ENCODE measurements at regions of chr10 and their contacts with region 1.

Region 1: DNA sequence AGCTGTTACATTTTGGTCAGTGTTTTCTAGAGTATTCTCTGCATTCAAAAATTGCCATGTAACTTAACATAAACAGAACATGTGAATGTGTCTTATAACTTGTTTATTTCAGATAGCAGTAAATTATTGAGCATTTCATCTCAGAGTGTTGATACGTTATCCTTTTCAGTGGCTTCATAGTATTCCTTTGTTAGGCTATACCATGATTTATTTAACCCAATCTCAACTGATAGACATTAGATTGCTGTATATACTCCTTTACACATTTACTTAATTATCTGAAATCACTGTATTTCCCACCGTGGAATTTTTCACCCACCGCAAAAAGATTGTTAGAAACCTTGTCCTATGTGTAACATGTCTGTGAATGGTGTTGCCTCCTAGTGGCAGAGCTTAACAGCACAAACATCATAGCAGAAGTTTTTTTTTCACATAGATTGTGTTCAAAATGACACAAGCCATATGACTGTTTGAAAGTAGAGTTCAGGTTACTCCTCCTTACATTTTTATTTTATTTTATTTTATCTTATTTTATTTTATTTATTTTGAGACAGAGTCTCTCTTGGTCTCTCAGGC is 21.4 kb downstream of the SLF2 start:
- DNase-seq: no peak
- H3K4me3 ChIP-seq: no peak overlapping the region
- H3K27ac ChIP-seq: no peak overlapping the region
- H3K4me1 ChIP-seq: no peaks in the 10 kb centered on the region
- H3K27me3 ChIP-seq: no peaks in the 10 kb centered on the region
- CTCF ChIP-seq: peak in 2 of 3 experiments; percentile 36 to 70; a peak in 2 of 4 replicates
- EP300 ChIP-seq: no peak
- POLR2A ChIP-seq: no peak
- RAD21 ChIP-seq: peak in 1 of 2 experiments; percentile 19; a peak in 2 of 4 replicates

Region 2: GRCh38 chr10:100923580-100923979 is 10.6 kb before region 1 on chr10:
- CTCF ChIA-PET with region 1: interaction called, 15 read pairs
- POLR2A ChIA-PET with region 1: no interaction called
- DNase-seq: no peak
- H3K4me3 ChIP-seq: no peak overlapping the region
- H3K27ac ChIP-seq: no peak overlapping the region
- H3K4me1 ChIP-seq: no peaks in the 10 kb centered on the region
- H3K27me3 ChIP-seq: no peaks in the 10 kb centered on the region
- CTCF ChIP-seq: no peak
- EP300 ChIP-seq: no peak
- POLR2A ChIP-seq: no peak
- RAD21 ChIP-seq: no peak

Region 3: DNA sequence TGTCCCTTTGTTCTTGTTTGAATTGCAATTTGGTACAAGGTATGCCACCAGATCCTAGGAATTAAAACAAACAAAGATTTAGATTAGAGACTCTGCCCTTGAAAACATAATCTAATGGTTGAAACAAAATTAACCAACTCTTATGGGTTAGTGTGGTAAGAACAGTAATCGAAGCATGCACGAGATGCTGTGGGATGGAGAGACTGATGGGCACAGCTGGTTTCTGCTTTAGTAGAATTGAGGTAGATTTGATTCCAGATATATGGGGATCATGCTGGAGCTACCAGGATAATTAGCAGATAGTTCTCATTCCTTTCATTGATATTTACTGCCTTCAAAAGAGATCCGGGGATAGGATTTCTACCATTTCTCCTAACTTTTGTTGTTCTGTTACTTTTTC is 14.7 kb after region 1 on chr10:
- CTCF ChIA-PET with region 1: interaction called, 17 read pairs
- POLR2A ChIA-PET with region 1: interaction called, 6 read pairs
- DNase-seq: no peak
- H3K4me3 ChIP-seq: no peak overlapping the region
- H3K27ac ChIP-seq: no peak overlapping the region
- H3K4me1 ChIP-seq: no peaks in the 10 kb centered on the region
- H3K27me3 ChIP-seq: no peaks in the 10 kb centered on the region
- CTCF ChIP-seq: no peak
- EP300 ChIP-seq: no peak
- POLR2A ChIP-seq: no peak
- RAD21 ChIP-seq: no peak

Measured in H1 (cell line).